GM12878 (cell line): ENCODE measurements at regions of chr3 and their contacts with region 1.

Region 1: GRCh38 chr3:56988458-56989168 is 71.9 kb upstream of the SPATA12 start:
- DNase-seq: no peak
- ATAC-seq: peak; percentile 86
- H3K4me3 ChIP-seq: no peak overlapping the region
- H3K27ac ChIP-seq: no peak overlapping the region
- H3K4me1 ChIP-seq: no peaks in the 10 kb centered on the region
- H3K27me3 ChIP-seq: peaks cover 0 to 6% of the 10 kb centered on the region in 2 experiments; a peak in 3 of 4 replicates
- CTCF ChIP-seq: peak; percentile 66 to 83 (median 70)
- EP300 ChIP-seq: no peak
- POLR2A ChIP-seq: no peak
- RAD21 ChIP-seq: peak; percentile 97

Region 2: GRCh38 chr3:56702490-56703315 is 285.9 kb before region 1 on chr3:
- CTCF ChIA-PET with region 1: interaction called, 231 read pairs
- POLR2A ChIA-PET with region 1: interaction called, 9 read pairs
- RAD21 ChIA-PET with region 1: interaction called, 83 read pairs
- SMC1A ChIA-PET with region 1: interaction called, 182 read pairs
- in situ Hi-C with region 1: loop called (anchors 5 kb)
- intact Hi-C with region 1: loop called (anchors 1 kb)
- DNase-seq: no peak
- ATAC-seq: peak; percentile 85
- H3K4me3 ChIP-seq: no peak overlapping the region
- H3K27ac ChIP-seq: no peak overlapping the region
- H3K4me1 ChIP-seq: peaks cover 10% of the 10 kb centered on the region; the same call in 1 of the 2 replicates
- H3K27me3 ChIP-seq: no peaks in the 10 kb centered on the region
- CTCF ChIP-seq: peak; percentile 66 to 83 (median 70)
- EP300 ChIP-seq: no peak
- POLR2A ChIP-seq: no peak
- RAD21 ChIP-seq: peak; percentile 99

Region 3: GRCh38 chr3:56819016-56819809 is 169.4 kb before region 1 on chr3:
- CTCF ChIA-PET with region 1: interaction called, 23 read pairs
- POLR2A ChIA-PET with region 1: no interaction called
- RAD21 ChIA-PET with region 1: interaction called, 13 read pairs
- SMC1A ChIA-PET with region 1: interaction called, 21 read pairs
- in situ Hi-C with region 1: no loop called
- intact Hi-C with region 1: no loop called
- DNase-seq: no peak
- ATAC-seq: no peak
- H3K4me3 ChIP-seq: no peak overlapping the region
- H3K27ac ChIP-seq: no peak overlapping the region
- H3K4me1 ChIP-seq: no peaks in the 10 kb centered on the region; the same call in 1 of the 2 replicates
- H3K27me3 ChIP-seq: peaks cover 0 to 2% of the 10 kb centered on the region in 2 experiments; a peak in 1 of 4 replicates
- CTCF ChIP-seq: no peak
- EP300 ChIP-seq: no peak
- POLR2A ChIP-seq: no peak
- RAD21 ChIP-seq: no peak

Region 4: GRCh38 chr3:56849698-56850097 is 138.9 kb before region 1 on chr3:
- CTCF ChIA-PET with region 1: interaction called, 136 read pairs
- POLR2A ChIA-PET with region 1: interaction called, 3 read pairs
- RAD21 ChIA-PET with region 1: interaction called, 7 read pairs
- SMC1A ChIA-PET with region 1: interaction called, 25 read pairs
- in situ Hi-C with region 1: no loop called
- intact Hi-C with region 1: no loop called
- DNase-seq: no peak
- ATAC-seq: no peak
- H3K4me3 ChIP-seq: no peak overlapping the region
- H3K27ac ChIP-seq: no peak overlapping the region
- H3K4me1 ChIP-seq: no peaks in the 10 kb centered on the region
- H3K27me3 ChIP-seq: no peaks in the 10 kb centered on the region
- CTCF ChIP-seq: no peak
- EP300 ChIP-seq: no peak
- POLR2A ChIP-seq: no peak
- RAD21 ChIP-seq: no peak

Region 5: DNA sequence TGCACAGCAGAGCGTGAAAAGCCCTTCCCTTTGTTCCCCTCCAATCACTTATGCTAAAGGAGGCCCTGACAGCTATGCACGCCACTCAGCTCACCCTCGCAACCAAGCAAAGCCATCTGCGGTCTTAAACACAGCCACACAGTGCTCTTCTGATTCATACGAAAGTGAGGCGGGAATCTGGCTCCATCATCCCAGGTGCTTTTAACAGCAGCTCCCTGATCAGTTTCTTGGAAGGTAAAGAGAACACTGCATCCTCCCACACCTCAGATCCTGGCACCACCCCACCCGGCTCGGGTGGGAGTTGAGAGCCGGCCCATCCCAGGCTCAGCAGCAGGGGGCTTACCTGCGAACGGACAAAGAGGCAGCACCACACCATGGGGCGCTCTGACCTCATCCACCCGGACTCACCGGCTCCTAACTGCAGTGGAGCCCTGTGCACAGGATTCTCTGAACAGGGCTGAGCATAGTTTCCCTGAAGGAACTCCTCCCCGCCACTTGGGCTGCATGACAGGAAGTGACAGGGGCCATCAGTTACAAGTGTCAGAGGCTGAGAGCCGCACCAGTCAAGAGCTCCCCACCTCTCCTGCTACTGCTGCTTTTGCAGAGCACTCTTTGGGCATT is 72.5 kb before region 1 on chr3:
- CTCF ChIA-PET with region 1: interaction called, 7 read pairs
- POLR2A ChIA-PET with region 1: no interaction called
- RAD21 ChIA-PET with region 1: interaction called, 17 read pairs
- SMC1A ChIA-PET with region 1: interaction called, 19 read pairs
- in situ Hi-C with region 1: no loop called
- intact Hi-C with region 1: loop called (anchors 2 kb)
- DNase-seq: peak; percentile 32
- ATAC-seq: peak; percentile 72
- H3K4me3 ChIP-seq: peak overlapping the region; percentile 66
- H3K27ac ChIP-seq: peak overlapping the region; percentile 92
- H3K4me1 ChIP-seq: peaks cover 49% of the 10 kb centered on the region
- H3K27me3 ChIP-seq: no peaks in the 10 kb centered on the region
- CTCF ChIP-seq: no peak
- EP300 ChIP-seq: 0 out of 4 replicates have a peak, but pooled peaks of 1 of the 2 experiments have one; percentile 20
- POLR2A ChIP-seq: peak; percentile 56
- RAD21 ChIP-seq: no peak

Region 6: DNA sequence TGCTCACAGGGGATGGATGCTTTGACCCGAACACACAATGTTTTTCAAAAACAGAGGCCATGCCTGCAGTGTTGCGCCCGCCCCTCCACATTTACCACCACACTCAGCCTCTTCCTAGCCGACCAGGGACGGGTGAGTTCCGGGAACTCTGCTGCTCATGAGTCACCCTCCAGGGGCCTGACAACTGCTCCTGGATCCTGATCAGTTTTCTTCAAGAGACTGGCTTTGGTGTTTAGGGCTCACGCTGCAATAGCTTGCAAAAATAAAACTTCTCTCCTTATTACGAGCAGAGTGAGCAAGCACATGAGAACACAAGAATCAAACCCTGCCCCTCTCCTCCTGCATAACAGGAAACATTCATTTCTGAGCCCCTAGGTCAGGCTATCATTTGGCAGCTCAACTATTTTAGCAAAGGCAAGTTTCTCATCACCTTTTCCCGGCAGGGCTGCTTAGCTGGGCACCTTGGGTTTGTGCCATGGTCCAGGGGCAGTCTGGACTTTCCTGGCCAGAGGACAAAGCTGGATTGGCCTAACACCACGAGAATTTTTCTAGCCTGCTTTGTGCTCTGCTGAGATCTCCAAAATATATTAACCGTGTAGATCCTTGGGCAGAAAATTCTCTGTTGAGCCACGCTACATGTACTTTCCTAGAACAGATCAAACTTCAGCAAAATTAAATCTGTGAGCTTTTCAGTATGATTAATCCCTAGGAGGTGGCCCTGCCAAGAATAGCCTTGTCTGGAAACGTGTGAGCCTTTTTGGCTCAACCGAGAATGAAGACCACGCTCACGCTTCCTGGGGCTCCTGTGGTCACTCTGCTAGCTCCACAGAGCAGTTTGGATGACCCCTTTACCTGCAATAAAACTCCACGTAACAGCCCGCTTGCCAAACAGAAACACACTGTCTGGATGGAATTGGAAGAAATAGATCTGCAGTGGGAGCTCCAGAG is 19.2 kb after region 1 on chr3:
- CTCF ChIA-PET with region 1: interaction called, 10 read pairs
- POLR2A ChIA-PET with region 1: no interaction called
- RAD21 ChIA-PET with region 1: no interaction called
- SMC1A ChIA-PET with region 1: interaction called, 7 read pairs
- in situ Hi-C with region 1: no loop called
- intact Hi-C with region 1: no loop called
- DNase-seq: no peak
- ATAC-seq: no peak
- H3K4me3 ChIP-seq: no peak overlapping the region
- H3K27ac ChIP-seq: no peak overlapping the region
- H3K4me1 ChIP-seq: no peaks in the 10 kb centered on the region
- H3K27me3 ChIP-seq: no peaks in the 10 kb centered on the region
- CTCF ChIP-seq: no peak
- EP300 ChIP-seq: no peak
- POLR2A ChIP-seq: no peak
- RAD21 ChIP-seq: no peak

Region 7: GRCh38 chr3:57130571-57131209 is 142.1 kb after region 1 on chr3:
- CTCF ChIA-PET with region 1: no interaction called
- POLR2A ChIA-PET with region 1: no interaction called
- RAD21 ChIA-PET with region 1: no interaction called
- SMC1A ChIA-PET with region 1: no interaction called
- in situ Hi-C with region 1: no loop called
- intact Hi-C with region 1: no loop called
- DNase-seq: no peak
- ATAC-seq: peak; percentile 31
- H3K4me3 ChIP-seq: no peak overlapping the region
- H3K27ac ChIP-seq: no peak overlapping the region
- H3K4me1 ChIP-seq: no peaks in the 10 kb centered on the region
- H3K27me3 ChIP-seq: no peaks in the 10 kb centered on the region; a peak in 2 of 4 replicates
- CTCF ChIP-seq: no peak
- EP300 ChIP-seq: no peak
- POLR2A ChIP-seq: no peak
- RAD21 ChIP-seq: no peak

Region 8: DNA sequence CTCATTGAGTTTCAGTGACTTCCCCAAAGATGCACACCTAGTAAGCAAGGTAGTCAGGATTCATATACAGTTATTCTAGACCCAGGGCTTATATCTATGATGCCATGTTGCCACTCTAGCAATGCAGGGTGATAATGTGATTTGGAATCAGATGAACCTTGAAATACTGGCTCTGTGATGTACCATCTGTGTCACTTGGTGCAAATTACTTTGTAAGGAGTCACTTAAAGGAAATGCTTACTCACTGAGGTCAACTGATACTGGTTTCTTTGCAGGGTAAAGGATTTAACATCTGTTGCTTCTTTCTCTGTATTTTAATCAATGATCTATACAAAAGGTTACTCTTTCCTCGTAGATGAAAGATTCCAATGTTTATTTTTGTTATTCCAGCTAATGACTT is 293.1 kb after region 1 on chr3:
- CTCF ChIA-PET with region 1: no interaction called
- POLR2A ChIA-PET with region 1: no interaction called
- RAD21 ChIA-PET with region 1: no interaction called
- SMC1A ChIA-PET with region 1: no interaction called
- in situ Hi-C with region 1: no loop called
- intact Hi-C with region 1: no loop called
- DNase-seq: no peak
- ATAC-seq: no peak
- H3K4me3 ChIP-seq: no peak overlapping the region
- H3K27ac ChIP-seq: no peak overlapping the region
- H3K4me1 ChIP-seq: no peaks in the 10 kb centered on the region
- H3K27me3 ChIP-seq: no peaks in the 10 kb centered on the region
- CTCF ChIP-seq: no peak
- EP300 ChIP-seq: no peak
- POLR2A ChIP-seq: no peak
- RAD21 ChIP-seq: no peak